ENCODE measurements at regions of chr1 and their contacts with region 1.

Region 1: GRCh38 chr1:83500987-83501591 is 497.8 kb downstream of the TTLL7 start:
- DNase-seq: no peak
- H3K4me3 Mint-ChIP-seq: no peak overlapping the region
- H3K27ac Mint-ChIP-seq: peak overlapping the region; percentile 31
- H3K4me1 Mint-ChIP-seq: peaks cover 31% of the 10 kb centered on the region
- H3K27me3 Mint-ChIP-seq: no peaks in the 10 kb centered on the region

Region 2: GRCh38 chr1:82775402-82776000 is 725.6 kb before region 1 on chr1:
- CTCF ChIA-PET with region 1: no interaction called
- intact Hi-C with region 1: loop called (anchors 10 kb)
- DNase-seq: peak; percentile 58
- H3K4me3 Mint-ChIP-seq: no peak overlapping the region
- H3K27ac Mint-ChIP-seq: no peak overlapping the region
- H3K4me1 Mint-ChIP-seq: no peaks in the 10 kb centered on the region
- H3K27me3 Mint-ChIP-seq: no peaks in the 10 kb centered on the region

Region 3: DNA sequence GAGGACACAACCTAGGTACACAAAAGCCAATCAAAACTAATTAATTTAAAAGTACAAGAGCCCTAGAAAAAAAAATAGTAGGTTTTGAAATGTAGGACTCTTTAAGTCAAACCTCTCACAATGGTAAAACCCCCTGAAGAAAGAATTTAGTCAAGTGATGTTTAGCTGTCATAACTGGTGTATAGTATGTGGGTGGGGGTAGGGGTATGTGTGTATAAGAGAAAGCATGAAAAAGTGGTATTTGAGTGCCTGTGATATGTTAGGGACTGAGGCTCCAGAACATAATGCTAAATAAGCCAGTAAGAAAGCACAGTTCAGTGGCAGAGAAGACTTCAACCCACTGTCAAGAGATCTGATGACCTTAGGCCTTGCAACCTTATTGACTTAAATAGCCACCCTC is 10.1 kb before region 1 on chr1:
- CTCF ChIA-PET with region 1: no interaction called
- intact Hi-C with region 1: loop called (anchors 1 kb)
- DNase-seq: no peak
- H3K4me3 Mint-ChIP-seq: no peak overlapping the region
- H3K27ac Mint-ChIP-seq: peak overlapping the region; percentile 46
- H3K4me1 Mint-ChIP-seq: peaks cover 52% of the 10 kb centered on the region
- H3K27me3 Mint-ChIP-seq: no peaks in the 10 kb centered on the region

Region 4: DNA sequence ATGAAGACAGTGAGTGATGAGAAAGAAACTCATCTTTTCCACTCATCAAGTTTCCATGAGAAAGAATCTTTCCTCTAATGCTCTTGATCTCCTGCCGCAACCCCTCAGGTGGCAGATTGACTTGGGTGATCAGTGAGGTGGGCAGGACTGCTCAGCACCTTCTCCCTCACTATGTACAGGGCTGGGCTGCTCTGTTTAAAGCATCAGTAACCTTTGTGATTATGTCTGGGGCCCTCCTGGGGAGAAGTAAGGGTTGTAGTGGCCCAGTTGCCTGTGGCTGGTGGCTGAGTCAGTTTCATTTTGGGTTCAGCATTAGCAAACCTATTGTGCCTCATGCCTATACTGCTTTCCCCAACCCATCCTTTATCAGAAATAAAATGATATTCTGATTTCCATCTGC is 131.8 kb after region 1 on chr1:
- CTCF ChIA-PET with region 1: no interaction called
- intact Hi-C with region 1: loop called (anchors 5 kb)
- DNase-seq: peak; percentile 49
- H3K4me3 Mint-ChIP-seq: no peak overlapping the region
- H3K27ac Mint-ChIP-seq: peak overlapping the region; percentile 86
- H3K4me1 Mint-ChIP-seq: peaks cover 17% of the 10 kb centered on the region
- H3K27me3 Mint-ChIP-seq: no peaks in the 10 kb centered on the region

Measured in activated naive CD4-positive, alpha-beta T cell treated with anti-CD3 and anti-CD28 coated beads for 36 hours (primary cell).